ENCODE measurements at regions of chr12 and their contacts with region 1.

Region 1: GRCh38 chr12:60180298-60180697 is 584.5 kb downstream of the SLC16A7 start:
- DNase-seq: no peak
- ATAC-seq: no peak

Region 2: GRCh38 chr12:59895166-59895775 is 285.0 kb before region 1 on chr12:
- intact Hi-C with region 1: loop called (anchors 10 kb)
- DNase-seq: no peak
- ATAC-seq: no peak

Region 3: DNA sequence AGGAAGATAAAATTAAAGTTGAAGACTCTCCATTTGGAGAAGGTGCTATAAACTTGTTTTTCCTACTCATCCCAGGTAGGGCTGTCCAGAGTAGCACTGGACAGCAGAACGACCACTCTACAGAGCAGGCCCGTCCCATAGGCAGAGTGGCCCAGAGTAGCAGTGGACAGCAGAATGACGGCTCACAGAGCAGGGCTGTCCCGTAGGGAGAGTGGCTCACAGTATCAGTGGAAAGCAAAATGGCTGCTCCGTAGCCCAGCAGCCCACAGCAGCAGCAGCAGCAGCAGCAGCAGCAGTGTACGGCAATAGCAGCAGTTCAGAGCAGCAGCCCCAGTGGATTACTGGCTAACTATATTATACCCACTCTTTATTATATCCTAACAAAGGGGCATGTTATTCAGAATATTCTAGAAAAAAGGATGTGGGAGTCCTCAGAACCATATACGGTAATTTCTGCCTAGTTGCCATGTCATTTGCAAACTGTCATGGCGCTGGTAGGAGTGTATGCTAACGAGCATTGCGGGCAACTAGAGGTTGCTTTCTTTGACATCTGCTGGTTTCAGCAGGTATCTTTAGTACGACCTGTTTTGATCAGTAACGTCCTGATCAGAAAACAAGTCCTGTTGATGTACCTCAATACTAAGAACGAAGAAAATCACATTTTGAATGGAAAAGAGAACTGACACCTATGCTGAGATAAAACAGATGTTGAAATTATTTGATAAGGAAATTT is 17.1 kb before region 1 on chr12:
- intact Hi-C with region 1: no loop called
- DNase-seq: no peak
- ATAC-seq: no peak

Region 4: GRCh38 chr12:60475825-60476224 is 295.5 kb after region 1 on chr12:
- intact Hi-C with region 1: no loop called
- DNase-seq: no peak
- ATAC-seq: no peak

Measured in sciatic nerve (tissue), 2 donors.